ENCODE measurements at regions of chr3 and their contacts with region 1.

Region 1: GRCh38 chr3:63911873-63912767 is at the start of gene SCAANT1:
- DNase-seq: peak; percentile 95
- ATAC-seq: peak; percentile 93
- total RNA-seq, gene SCAANT1: not detected

Region 2: DNA sequence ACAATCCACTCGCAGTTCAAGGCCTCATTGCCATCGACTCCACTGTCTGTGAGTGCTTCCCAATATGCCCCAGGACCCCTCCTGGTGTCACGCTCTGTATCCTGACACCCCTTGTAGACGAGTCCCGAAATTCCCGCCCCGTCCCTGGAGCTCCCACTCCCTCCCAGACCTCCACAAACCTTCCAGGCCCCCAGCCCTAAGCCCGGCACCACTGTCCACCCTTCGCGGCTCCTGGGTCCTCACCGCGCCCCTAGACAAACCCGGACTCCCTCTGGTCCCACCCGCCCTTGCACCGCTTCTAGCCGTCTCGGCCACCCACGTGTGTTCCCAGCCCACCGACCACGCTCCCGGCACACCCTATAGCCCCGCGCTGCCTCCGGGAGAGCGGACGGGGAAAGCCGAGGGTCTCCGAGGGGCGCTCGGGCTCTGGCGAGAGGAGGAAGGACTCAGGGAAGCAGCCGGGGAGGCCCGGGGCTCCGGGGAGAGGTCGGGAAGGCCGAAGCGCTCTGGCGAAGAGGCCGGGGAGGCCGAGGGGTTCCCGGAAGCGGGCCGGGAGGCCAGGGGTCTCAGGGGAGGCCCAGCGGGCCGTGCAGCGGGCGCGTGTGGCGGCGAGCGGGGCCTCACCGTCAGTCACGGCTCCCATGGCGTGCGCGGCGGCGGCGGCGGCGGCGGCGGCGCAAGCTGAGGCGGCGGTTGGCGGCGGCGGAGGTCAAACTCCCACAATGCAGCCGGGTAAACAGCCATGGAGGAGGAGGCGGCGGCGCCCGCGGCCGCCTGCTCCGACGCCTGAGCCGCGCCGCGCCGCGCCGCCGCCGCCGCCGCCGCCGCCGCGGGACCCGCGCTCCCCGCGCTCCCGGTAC is 48.7 kb before region 1 on chr3 and contains the starts of genes ATXN7 and THOC7:
- intact Hi-C with region 1: loop called (anchors 2 kb)
- DNase-seq: peak; percentile 88
- ATAC-seq: peak; percentile 88
- total RNA-seq, gene ATXN7: 9.3 TPM
- total RNA-seq, gene THOC7: 79.1 TPM

Region 3: GRCh38 chr3:63961891-63962290 is 49.8 kb after region 1 on chr3:
- intact Hi-C with region 1: loop called (anchors 5 kb)
- DNase-seq: no peak
- ATAC-seq: no peak

Region 4: GRCh38 chr3:63993653-63994079 is 81.5 kb after region 1 on chr3:
- intact Hi-C with region 1: loop called (anchors 2 kb)
- DNase-seq: peak; percentile 70
- ATAC-seq: peak; percentile 88